Left ventricle myocardium superior (tissue), 1 donor: ENCODE measurements at regions of chr3 and their contacts with region 1.

Region 1: DNA sequence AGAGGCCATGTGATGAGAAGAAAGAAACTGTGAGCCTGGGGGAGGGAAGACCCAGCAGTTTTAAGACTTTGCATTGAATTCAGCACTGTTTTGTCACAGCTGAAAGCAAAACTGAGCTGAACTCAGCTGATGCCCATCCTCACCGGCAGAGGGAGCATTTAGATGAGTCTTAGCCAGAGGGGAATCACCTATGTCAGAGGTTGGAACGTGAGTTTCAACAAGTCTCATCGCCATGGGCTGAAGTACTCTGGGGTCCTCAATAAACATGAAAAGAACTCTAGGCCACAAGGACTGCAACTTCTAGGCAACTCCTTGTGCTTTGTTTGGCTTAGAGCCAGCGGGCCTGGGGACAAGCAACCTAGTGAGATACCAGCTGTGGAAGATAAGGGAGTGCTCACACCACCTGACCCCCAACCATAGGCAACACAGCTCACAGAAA is 324.5 kb downstream of the TBL1XR1 start:
- DNase-seq: peak; percentile 35
- ATAC-seq: peak; percentile 73

Region 2: DNA sequence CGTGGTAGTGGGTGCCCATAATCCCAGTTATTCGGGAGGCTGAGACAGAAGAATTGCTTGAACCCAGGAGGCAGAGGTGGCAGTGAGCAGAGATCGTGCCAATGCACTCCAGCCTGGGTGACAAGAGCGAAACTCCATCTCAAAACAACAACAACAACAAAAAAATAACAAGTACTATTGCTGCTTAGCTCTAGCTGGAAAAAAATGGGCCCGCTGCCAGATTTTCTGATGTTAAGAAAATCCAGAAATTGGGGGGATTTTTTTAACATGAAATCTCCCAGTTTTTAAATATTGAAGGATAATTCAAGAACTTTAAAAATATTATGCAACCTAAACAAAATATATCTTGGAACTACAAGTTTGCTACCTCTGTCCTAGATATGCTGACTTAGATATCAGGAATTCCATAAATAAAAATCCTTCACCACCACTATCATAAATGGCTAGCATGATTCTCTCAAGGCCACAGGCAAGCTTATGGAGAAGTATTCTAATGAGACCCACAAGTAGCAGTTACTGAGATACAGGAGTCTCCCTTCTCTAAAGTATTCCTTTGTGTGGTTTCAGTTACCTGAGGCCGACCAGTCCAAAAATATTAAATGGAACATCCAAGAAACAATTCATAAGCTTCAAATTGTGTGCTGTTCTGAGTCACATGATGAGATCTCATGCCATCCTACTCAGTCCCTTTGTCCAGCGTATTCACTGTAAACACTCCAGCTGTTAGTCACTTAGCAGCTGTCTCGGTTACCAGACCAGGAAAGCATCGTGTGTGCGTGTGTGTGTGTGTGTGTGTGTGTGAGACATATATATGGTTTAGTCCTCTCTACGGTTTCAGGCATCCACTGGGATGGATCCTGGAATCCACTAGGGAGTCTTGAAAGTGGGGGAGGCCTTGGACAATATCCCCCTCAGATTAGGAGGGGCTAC is 47.3 kb after region 1 on chr3:
- intact Hi-C with region 1: no loop called
- DNase-seq: no peak
- ATAC-seq: no peak

Region 3: DNA sequence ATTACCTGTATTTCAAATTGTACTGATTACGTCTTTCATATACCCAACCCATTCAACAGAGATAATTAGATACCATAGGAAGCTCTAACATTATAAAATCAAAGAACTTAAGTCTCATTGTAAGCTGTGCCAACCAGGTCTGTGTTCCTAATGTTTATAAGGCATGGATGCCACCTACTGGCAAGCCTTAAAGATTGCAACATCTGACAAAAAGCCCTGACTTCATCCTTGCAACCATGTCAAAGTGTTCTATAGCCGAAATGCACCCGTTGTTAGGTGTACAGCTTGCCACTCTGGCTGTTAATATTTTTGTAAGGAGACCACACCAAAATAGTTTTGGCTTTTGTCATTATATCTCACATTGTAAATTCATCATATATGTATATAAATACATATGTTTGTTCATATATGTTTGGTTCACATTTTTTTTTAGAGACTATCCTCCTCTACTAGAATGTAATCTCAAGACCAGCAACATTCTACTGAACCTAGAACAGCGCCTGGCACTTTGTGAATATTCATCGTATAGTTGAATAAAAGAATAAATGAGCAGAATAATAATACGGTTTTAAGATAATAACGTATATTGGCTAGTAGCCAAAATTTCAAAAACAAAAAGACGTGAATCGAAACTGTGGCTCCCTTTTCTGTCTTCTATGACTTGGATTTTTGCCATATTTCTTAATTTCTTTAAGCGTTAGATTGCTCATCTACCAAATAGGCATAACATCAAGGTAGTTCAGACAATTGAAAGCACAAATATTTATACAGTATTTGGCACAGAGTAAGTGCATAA is 66.4 kb after region 1 on chr3:
- intact Hi-C with region 1: loop called (anchors 10 kb)
- DNase-seq: no peak
- ATAC-seq: peak; percentile 81

Region 4: GRCh38 chr3:178385280-178385952 is 1512.6 kb after region 1 on chr3:
- intact Hi-C with region 1: loop called (anchors 5 kb)
- DNase-seq: no peak
- ATAC-seq: peak; percentile 74